ENCODE measurements at regions of chr19 and their contacts with region 1.

Region 1: GRCh38 chr19:29844891-29845572 is 33.2 kb downstream of the CCNE1 start:
- DNase-seq: peak; percentile 90 to 96
- H3K4me3 ChIP-seq: peak overlapping the region; percentile 75
- H3K27ac ChIP-seq: peak overlapping the region; percentile 78
- H3K4me1 ChIP-seq: peaks cover 23% of the 10 kb centered on the region
- H3K27me3 ChIP-seq: no peaks in the 10 kb centered on the region
- CTCF ChIP-seq: no peak

Region 2: DNA sequence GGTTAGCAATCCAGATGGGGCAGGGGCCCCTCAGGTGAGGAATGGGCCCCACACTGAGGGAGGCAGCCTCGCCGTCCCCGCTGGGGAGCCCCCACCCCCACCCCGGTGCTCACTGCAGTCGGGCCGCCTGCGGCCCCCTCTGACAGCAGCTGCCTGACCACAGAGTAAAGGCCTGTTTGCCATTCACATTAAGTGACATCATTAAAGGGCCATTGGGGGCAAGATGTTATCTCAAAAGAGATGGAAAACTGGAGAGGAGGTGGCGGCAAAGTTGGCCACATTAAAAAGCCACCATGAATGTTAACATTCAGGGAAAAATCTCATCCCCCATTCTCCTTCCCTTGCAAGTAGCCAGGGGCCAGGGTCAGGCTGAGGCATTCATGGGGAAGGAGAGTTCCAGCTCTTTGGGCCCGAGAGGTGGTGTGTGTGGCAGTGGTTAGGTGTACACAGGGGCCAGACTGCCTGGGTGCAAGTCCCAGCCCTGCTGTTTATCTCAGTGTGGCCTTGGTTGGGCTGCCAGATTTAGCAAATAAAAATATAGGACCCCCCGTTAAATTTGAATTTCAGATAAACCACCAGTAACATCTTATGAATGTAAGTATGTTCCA is 298.3 kb before region 1 on chr19:
- CTCF ChIA-PET with region 1: no interaction called
- POLR2A ChIA-PET with region 1: no interaction called
- intact Hi-C with region 1: no loop called
- DNase-seq: no peak
- H3K4me3 ChIP-seq: no peak overlapping the region
- H3K27ac ChIP-seq: no peak overlapping the region
- H3K4me1 ChIP-seq: no peaks in the 10 kb centered on the region
- H3K27me3 ChIP-seq: peaks cover 76% of the 10 kb centered on the region
- CTCF ChIP-seq: no peak

Region 3: GRCh38 chr19:29671393-29672160 is 173.5 kb before region 1 on chr19:
- CTCF ChIA-PET with region 1: no interaction called
- POLR2A ChIA-PET with region 1: interaction called, 18 read pairs
- intact Hi-C with region 1: no loop called
- DNase-seq: peak; percentile 82 to 92
- H3K4me3 ChIP-seq: no peak overlapping the region; the same call in 1 of the 2 replicates
- H3K27ac ChIP-seq: peak overlapping the region; percentile 75
- H3K4me1 ChIP-seq: peaks cover 63% of the 10 kb centered on the region
- H3K27me3 ChIP-seq: no peaks in the 10 kb centered on the region
- CTCF ChIP-seq: peak; percentile 58

Region 4: GRCh38 chr19:29761575-29762232 is 83.3 kb before region 1 on chr19:
- CTCF ChIA-PET with region 1: interaction called, 5 read pairs
- POLR2A ChIA-PET with region 1: no interaction called
- intact Hi-C with region 1: loop called (anchors 5 kb)
- DNase-seq: no peak
- H3K4me3 ChIP-seq: no peak overlapping the region
- H3K27ac ChIP-seq: no peak overlapping the region
- H3K4me1 ChIP-seq: no peaks in the 10 kb centered on the region
- H3K27me3 ChIP-seq: peaks cover 21% of the 10 kb centered on the region
- CTCF ChIP-seq: no peak

Region 5: GRCh38 chr19:29811125-29812079 is 33.6 kb before region 1 on chr19 and contains the start of gene CCNE1:
- CTCF ChIA-PET with region 1: interaction called, 5 read pairs
- POLR2A ChIA-PET with region 1: no interaction called
- intact Hi-C with region 1: loop called (anchors 1 kb)
- DNase-seq: peak; percentile 49 to 91
- H3K4me3 ChIP-seq: peak within 1 kb of the TSS; percentile 60
- H3K27ac ChIP-seq: no peak within 1 kb of the TSS
- H3K4me1 ChIP-seq: peaks cover 9% of the 10 kb centered on the region; the same call in 1 of the 2 replicates
- H3K27me3 ChIP-seq: no peaks in the 10 kb centered on the region
- CTCF ChIP-seq: no peak
- total RNA-seq, gene CCNE1: 8.9 and 10.6 TPM in 2 replicates

Region 6: GRCh38 chr19:29855741-29856500 is 10.9 kb after region 1 on chr19:
- CTCF ChIA-PET with region 1: interaction called, 5 read pairs
- POLR2A ChIA-PET with region 1: interaction called, 13 read pairs
- intact Hi-C with region 1: no loop called
- DNase-seq: no peak
- H3K4me3 ChIP-seq: no peak overlapping the region
- H3K27ac ChIP-seq: no peak overlapping the region
- H3K4me1 ChIP-seq: peaks cover 7% of the 10 kb centered on the region; the same call in 1 of the 2 replicates
- H3K27me3 ChIP-seq: no peaks in the 10 kb centered on the region
- CTCF ChIP-seq: no peak

Region 7: DNA sequence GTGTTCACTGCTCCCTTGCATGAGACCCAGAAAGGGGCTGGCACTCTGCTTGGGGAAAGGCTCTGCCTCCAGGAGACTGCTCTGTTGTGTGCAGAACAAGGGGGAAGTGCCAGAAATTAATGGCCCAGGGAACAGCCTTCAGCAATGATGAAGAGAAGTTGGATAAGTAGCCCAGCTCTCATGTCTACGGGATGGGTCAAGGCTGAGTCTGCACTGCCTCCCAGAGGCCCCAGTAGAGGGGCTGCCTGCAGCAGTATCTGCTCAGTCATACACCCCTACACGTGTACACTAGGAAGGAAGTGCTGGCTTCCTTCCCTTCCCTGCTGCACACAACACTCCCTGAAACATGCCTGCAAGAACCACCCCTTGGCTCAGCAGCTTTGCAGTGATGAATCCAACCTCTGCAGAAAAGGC is 42.4 kb after region 1 on chr19:
- CTCF ChIA-PET with region 1: no interaction called
- POLR2A ChIA-PET with region 1: no interaction called
- intact Hi-C with region 1: no loop called
- DNase-seq: no peak
- H3K4me3 ChIP-seq: no peak overlapping the region
- H3K27ac ChIP-seq: no peak overlapping the region
- H3K4me1 ChIP-seq: no peaks in the 10 kb centered on the region
- H3K27me3 ChIP-seq: peaks cover 38% of the 10 kb centered on the region
- CTCF ChIP-seq: no peak

Measured in PC-9 (cell line).